Activated CD4-positive, alpha-beta T cell treated with anti-CD3 and anti-CD28 coated beads for 36 hours (primary cell): ENCODE measurements at regions of chr9 and their contacts with region 1.

Region 1: GRCh38 chr9:129139993-129140396 is 28.8 kb downstream of the PTPA start:
- DNase-seq: peak; percentile 91
- ATAC-seq: peak; percentile 90
- H3K4me3 Mint-ChIP-seq: peak overlapping the region; percentile 83
- H3K27ac Mint-ChIP-seq: peak overlapping the region; percentile 99
- H3K4me1 Mint-ChIP-seq: peaks cover 37% of the 10 kb centered on the region
- H3K27me3 Mint-ChIP-seq: no peaks in the 10 kb centered on the region

Region 2: DNA sequence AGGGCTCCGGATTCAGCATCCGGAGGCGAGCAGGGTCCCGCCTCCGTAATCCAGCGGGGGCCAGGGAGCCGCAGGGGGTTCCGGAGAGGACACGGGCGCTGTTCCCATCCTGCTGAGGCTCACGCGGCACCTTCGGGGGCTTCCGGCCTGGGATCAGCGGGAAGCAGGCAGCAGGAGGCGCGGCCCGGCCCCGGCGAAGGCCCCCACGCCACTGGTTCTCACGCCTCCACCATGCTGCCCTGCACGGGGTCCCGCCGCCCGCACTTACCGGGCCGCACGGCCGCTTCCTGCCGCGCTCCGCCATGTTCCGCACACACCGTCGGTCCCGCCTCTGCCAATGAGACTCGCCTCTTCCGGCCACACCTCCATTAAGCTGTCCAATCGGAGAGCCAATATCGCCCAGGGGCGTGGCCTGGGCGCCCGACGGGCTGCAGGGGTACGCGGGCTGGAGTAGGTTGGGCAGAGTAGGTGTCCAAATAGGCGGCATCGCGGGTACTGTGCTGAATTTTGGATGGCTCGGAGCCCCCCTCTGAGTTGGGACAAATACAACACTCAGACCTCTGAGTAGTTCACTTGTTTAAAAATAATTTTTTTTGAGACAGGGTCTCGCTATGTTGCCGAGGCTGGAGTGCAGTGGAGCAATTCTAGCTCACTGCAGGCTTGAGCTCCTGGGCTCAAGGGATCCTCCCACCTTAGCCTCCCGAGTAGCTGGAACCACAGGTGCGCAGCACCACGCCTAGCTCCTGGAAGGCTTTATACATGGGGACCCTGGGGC is 310.3 kb before region 1 on chr9 and contains the start of gene SPOUT1:
- CTCF ChIA-PET with region 1: no interaction called
- POLR2A ChIA-PET with region 1: no interaction called
- intact Hi-C with region 1: no loop called
- DNase-seq: peak; percentile 96
- ATAC-seq: peak; percentile 98
- H3K4me3 Mint-ChIP-seq: peak within 1 kb of the TSS; percentile 91
- H3K27ac Mint-ChIP-seq: peak within 1 kb of the TSS; percentile 88
- H3K4me1 Mint-ChIP-seq: peaks cover 23% of the 10 kb centered on the region
- H3K27me3 Mint-ChIP-seq: no peaks in the 10 kb centered on the region
- total RNA-seq, gene SPOUT1: 87.9 to 92.9 TPM

Region 3: DNA sequence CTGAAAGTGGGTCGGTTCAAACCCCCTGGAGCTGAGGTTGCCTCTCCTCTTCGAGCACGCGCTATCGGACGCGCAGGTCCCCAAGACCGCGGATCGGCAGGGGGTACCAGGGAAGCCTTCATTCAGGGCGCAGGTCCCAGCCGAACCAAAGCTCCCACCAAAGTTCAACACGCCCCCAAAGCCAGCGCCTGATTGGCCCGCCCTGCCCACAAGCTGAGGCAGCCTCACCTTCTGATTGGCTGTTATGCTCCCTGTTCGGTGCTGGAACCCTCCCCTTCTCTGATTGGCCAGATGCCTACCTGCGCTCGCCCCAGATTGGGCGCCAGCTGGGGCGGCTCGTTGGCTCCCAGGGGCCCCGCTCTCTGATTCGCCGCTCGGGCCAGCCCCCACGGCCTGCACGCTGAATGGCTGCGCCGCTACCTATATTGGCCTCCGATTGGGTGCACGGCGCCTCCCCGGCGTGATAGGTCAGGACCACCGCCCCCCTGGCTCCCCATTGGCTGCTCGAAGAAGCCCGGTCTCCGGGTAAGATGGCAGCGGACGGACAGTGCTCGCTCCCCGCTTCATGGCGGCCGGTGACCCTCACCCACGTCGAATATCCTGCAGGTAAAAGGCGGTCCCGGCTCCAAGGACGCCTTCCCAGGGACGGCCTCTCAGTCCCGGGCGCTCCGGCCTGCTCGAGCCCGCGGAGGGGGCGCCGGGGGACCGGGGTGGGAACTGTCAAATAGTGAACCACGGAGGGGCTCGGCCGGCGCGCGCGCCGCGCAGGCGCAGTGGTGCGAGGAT is 59.2 kb before region 1 on chr9 and contains the start of gene DOLPP1:
- CTCF ChIA-PET with region 1: interaction called, 7 read pairs
- POLR2A ChIA-PET with region 1: no interaction called
- intact Hi-C with region 1: loop called in 1 of 2 experiments (anchors 1 kb)
- DNase-seq: peak; percentile 99
- ATAC-seq: peak; percentile 98
- H3K4me3 Mint-ChIP-seq: peak within 1 kb of the TSS; percentile 83
- H3K27ac Mint-ChIP-seq: peak within 1 kb of the TSS; percentile 63
- H3K4me1 Mint-ChIP-seq: peaks cover 20% of the 10 kb centered on the region
- H3K27me3 Mint-ChIP-seq: no peaks in the 10 kb centered on the region
- total RNA-seq, gene DOLPP1: 15.1 to 16.4 TPM

Region 4: DNA sequence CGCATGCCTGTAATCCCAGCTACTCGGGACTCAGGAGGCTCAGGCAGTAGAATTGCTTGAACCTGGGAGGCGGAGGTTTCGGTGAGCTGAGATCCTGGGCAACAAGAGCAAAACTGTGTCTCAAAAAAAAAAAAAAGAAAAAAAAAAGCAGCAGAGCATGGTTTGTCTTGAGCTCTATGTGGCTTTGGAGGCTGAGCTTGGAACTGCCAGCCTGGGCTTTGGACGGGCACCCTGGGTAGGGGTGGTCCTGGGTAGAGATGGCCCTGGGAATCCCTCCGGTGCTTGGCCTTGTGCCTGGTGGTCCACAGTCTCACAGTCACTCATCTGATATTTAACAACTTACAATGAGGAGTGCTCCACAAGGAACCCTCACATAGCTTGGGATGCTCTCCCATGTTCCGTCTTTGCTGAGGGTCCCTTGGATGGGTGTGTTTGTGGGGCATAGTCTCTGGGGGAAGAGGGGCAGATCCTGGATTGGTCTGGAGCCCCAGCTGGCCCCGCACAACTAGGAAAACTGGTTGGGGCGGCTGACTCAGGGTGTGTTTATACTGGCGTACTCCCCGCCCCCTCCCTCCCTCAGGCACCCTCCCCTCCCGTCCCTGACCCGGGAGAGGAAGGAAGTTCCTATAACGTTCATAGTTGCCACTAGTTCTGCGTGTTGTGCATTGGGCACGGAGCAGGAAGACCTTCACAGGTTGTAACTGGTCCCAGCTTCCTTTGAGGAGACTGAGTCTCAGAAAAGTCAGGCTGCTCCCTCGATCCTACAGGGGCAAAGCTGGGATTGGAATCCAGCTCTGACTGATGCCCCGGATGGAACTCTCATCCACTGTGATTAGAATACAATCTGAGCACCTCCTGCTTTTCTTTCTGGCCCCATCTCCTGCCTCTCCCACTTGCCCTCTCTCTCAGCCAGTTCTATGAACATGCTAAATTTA is 26.9 kb after region 1 on chr9:
- CTCF ChIA-PET with region 1: interaction called, 42 read pairs
- POLR2A ChIA-PET with region 1: no interaction called
- intact Hi-C with region 1: loop called in 1 of 2 experiments (anchors 2 kb)
- DNase-seq: peak; percentile 54
- ATAC-seq: peak; percentile 64
- H3K4me3 Mint-ChIP-seq: peak overlapping the region; percentile 55
- H3K27ac Mint-ChIP-seq: peak overlapping the region; percentile 31
- H3K4me1 Mint-ChIP-seq: peaks cover 22% of the 10 kb centered on the region
- H3K27me3 Mint-ChIP-seq: no peaks in the 10 kb centered on the region

Region 5: DNA sequence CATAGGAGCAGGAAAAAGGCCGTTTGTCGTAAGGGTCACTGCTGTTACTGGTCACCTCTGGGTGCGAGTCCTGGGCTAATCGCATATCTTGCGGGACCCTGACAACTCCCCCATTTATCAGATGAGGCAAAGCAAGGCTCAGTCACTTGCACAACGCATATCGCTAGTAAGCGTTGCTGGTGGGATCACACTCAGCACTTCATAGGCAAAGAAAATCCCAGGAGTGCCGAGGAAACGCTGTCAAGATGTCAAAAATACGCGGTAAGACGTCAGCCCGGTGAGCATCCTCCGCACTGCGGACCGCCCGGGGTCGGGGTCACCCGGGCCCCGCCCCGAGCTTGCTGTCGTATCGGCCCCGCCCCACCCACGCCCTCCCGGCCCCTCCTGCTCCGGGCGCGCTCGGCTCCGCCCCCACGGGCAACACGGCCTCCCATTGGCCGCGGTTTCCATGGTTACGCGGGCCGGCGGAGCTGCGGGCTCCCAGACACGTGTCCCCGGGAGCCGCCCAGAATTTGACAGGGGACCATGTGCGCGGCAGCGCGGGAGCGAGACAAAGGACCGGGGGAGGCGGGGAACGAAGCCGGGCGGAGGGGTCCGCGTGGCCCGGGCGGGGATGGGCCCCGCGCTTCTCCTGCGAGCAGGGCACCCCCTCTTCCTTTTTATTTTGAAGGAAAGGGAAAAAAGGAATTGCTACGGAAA is 118.3 kb after region 1 on chr9:
- CTCF ChIA-PET with region 1: no interaction called
- POLR2A ChIA-PET with region 1: no interaction called
- intact Hi-C with region 1: loop called in 1 of 2 experiments (anchors 2 kb)
- DNase-seq: peak; percentile 96
- ATAC-seq: peak; percentile 96
- H3K4me3 Mint-ChIP-seq: peak overlapping the region; percentile 61
- H3K27ac Mint-ChIP-seq: no peak overlapping the region
- H3K4me1 Mint-ChIP-seq: peaks cover 27% of the 10 kb centered on the region
- H3K27me3 Mint-ChIP-seq: peaks cover 15% of the 10 kb centered on the region

Region 6: DNA sequence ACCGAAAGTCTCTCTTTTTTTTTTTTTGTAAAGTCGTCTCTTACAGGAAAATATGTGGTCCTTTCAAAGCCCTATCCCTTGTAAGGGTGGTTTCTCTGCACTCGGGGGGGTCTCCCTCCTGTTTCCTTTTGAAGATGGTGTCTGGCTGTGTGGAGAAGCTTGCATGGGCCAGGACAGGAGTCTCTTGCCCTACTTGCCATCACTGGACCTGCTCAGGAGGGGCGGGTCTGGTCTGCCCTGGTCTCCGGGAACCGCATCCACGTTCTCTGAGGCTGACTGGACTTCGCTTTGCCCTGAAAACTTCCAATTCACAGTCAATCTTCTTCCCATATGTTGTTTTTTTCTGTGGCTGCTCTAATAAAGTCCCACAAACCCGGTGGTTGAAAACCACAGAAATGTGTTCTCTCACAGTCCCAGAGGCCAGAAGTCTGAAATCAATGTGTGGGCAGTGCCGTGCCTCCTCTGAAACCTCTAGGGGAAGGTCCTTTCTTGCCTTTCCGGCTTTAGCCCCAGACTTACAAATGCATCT is 131.0 kb after region 1 on chr9:
- CTCF ChIA-PET with region 1: no interaction called
- POLR2A ChIA-PET with region 1: no interaction called
- intact Hi-C with region 1: no loop called
- DNase-seq: peak; percentile 18
- ATAC-seq: peak; percentile 9
- H3K4me3 Mint-ChIP-seq: peak overlapping the region; percentile 35
- H3K27ac Mint-ChIP-seq: peak overlapping the region; percentile 34
- H3K4me1 Mint-ChIP-seq: peaks cover 25% of the 10 kb centered on the region
- H3K27me3 Mint-ChIP-seq: no peaks in the 10 kb centered on the region

Region 7: GRCh38 chr9:129460323-129461261 is 320.6 kb after region 1 on chr9:
- CTCF ChIA-PET with region 1: no interaction called
- POLR2A ChIA-PET with region 1: no interaction called
- intact Hi-C with region 1: loop called in 1 of 2 experiments (anchors 1 kb)
- DNase-seq: peak; percentile 96
- ATAC-seq: peak; percentile 87
- H3K4me3 Mint-ChIP-seq: peak overlapping the region; percentile 72
- H3K27ac Mint-ChIP-seq: peak overlapping the region; percentile 92
- H3K4me1 Mint-ChIP-seq: peaks cover 38% of the 10 kb centered on the region
- H3K27me3 Mint-ChIP-seq: no peaks in the 10 kb centered on the region

Region 8: DNA sequence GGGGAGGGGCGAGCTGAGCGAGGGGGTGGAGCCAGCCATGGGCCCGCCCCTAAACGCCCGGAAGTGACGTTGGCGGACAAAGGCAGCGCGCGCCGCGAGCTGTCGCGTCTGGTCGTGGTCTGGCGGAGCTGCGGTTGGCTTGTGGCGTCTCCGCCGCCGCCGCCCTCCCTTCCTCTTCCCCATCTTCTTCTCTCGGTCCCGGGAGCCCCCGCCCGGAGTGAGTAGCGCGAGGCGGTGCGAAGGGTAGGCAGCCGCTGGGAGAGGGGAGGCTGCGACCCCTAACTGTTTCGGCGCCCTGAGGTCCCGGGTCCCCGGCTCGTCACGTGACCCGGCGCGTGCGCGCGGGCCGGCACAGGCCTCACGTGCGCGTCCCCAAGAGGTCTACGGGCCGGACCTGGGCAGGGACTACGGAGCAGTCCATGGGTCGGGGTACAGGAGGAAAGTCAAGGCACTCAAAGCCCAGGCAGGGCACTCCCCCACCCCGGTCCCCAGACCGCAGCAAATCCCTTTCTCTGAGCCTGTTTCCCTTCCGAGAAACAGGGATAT is 486.2 kb after region 1 on chr9 and contains the start of gene NTMT1:
- CTCF ChIA-PET with region 1: interaction called, 96 read pairs
- POLR2A ChIA-PET with region 1: interaction called, 5 read pairs
- intact Hi-C with region 1: loop called (anchors 1 kb)
- DNase-seq: peak; percentile 95
- ATAC-seq: peak; percentile 76
- H3K4me3 Mint-ChIP-seq: peak within 1 kb of the TSS; percentile 77
- H3K27ac Mint-ChIP-seq: peak within 1 kb of the TSS; percentile 93
- H3K4me1 Mint-ChIP-seq: peaks cover 52% of the 10 kb centered on the region
- H3K27me3 Mint-ChIP-seq: peaks cover 4% of the 10 kb centered on the region
- total RNA-seq, gene NTMT1: 50.1 to 69.2 TPM